Activated T-helper 2 cell treated with anti-CD3 and anti-CD28 coated beads, Interferon-gamma antibody, Interleukin-2, Interleukin-4, amounts not matched to agents 10 μg/mL and 5 μg/mL and 100 μg/mL, durations not matched to agents 14 hours and 24 hours and 36 hours (primary cell): ENCODE measurements at regions of chr20 and their contacts with region 1.

Region 1: GRCh38 chr20:5369629-5370542 is 53.1 kb upstream of the PROKR2 start:
- DNase-seq: no peak
- H3K4me3 Mint-ChIP-seq: no peak overlapping the region
- H3K27ac Mint-ChIP-seq: no peak overlapping the region
- H3K4me1 Mint-ChIP-seq: peaks cover 14% of the 10 kb centered on the region
- H3K27me3 Mint-ChIP-seq: peaks cover 1% of the 10 kb centered on the region

Region 2: DNA sequence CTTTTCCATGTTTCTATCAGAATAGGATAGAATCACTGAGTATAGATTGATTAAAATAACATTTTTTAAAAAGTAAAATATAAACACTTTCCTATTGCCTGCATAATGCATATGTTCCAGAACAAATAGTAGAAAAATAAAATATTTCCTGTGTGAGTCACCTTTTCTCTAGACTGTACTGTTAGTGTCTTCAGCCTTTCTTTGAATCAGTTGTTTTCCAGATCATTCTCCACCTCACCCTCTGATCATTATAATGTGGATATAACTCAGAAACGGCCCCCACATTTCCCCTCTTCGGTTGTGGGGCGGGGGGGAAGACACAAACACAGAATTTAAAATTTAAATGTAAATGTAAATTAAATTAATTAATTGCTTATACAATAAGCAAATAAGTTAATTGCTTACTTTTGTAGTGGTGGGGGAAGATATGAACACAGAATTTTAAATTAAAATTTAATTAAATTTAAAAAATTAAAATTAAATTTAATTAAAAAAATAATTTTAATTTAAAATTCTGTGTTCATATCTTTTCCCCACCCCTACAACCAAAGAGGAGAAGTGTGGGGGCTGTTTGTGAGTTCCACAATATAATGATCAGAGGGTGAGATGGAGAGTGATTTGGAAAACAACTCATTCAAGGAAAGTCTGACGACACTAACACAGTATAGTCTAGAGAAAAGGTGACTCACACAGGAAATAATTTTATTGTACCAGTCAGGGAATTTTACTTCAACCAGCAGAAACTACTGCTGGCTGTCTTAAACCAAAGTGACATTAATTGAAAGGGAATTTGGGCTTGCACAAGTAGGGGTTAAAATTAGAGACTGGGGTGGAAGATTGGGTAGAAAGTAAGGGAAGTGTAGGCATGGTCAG is 16.0 kb before region 1 on chr20:
- intact Hi-C with region 1: loop called (anchors 1 kb)
- DNase-seq: no peak
- H3K4me3 Mint-ChIP-seq: no peak overlapping the region
- H3K27ac Mint-ChIP-seq: peak overlapping the region; percentile 60
- H3K4me1 Mint-ChIP-seq: peaks cover 29% of the 10 kb centered on the region
- H3K27me3 Mint-ChIP-seq: no peaks in the 10 kb centered on the region

Region 3: GRCh38 chr20:5402903-5403531 is 33.1 kb after region 1 on chr20:
- intact Hi-C with region 1: no loop called
- DNase-seq: no peak
- H3K4me3 Mint-ChIP-seq: no peak overlapping the region
- H3K27ac Mint-ChIP-seq: no peak overlapping the region
- H3K4me1 Mint-ChIP-seq: peaks cover 4% of the 10 kb centered on the region
- H3K27me3 Mint-ChIP-seq: no peaks in the 10 kb centered on the region